BJ (cell line): ENCODE measurements at regions of chr17 and their contacts with region 1.

Region 1: GRCh38 chr17:15944759-15945529 is at the start of gene ADORA2B:
- DNase-seq: no peak
- H3K4me3 ChIP-seq: peak within 1 kb of the TSS; percentile 67
- H3K27me3 ChIP-seq: no peaks in the 10 kb centered on the region
- CTCF ChIP-seq: peak; percentile 39
- polyA plus RNA-seq, gene ADORA2B: 8.0 and 10.5 TPM in 2 replicates

Region 2: DNA sequence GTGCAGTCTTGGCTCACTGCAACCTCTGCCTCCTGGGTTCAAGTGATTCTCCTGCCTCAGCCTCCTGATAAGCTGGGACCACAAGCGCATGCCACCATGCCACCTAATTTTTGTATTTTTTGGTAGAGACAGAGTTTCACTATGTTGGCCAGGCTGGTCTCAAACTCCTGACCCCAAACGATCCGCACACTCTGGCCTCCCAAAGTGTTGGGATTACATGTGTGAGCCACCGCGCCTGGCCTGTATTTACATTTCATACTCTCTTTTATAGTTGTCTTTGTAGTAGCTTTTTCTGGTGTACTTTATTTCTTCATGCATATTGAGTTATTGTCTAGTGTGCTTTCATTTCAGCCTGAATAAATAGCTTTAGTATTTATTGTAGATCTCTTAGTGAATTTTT is 10.1 kb before region 1 on chr17:
- CTCF ChIA-PET with region 1: interaction called, 13 read pairs
- POLR2A ChIA-PET with region 1: no interaction called
- DNase-seq: no peak
- H3K4me3 ChIP-seq: no peak overlapping the region
- H3K27me3 ChIP-seq: no peaks in the 10 kb centered on the region
- CTCF ChIP-seq: no peak

Region 3: DNA sequence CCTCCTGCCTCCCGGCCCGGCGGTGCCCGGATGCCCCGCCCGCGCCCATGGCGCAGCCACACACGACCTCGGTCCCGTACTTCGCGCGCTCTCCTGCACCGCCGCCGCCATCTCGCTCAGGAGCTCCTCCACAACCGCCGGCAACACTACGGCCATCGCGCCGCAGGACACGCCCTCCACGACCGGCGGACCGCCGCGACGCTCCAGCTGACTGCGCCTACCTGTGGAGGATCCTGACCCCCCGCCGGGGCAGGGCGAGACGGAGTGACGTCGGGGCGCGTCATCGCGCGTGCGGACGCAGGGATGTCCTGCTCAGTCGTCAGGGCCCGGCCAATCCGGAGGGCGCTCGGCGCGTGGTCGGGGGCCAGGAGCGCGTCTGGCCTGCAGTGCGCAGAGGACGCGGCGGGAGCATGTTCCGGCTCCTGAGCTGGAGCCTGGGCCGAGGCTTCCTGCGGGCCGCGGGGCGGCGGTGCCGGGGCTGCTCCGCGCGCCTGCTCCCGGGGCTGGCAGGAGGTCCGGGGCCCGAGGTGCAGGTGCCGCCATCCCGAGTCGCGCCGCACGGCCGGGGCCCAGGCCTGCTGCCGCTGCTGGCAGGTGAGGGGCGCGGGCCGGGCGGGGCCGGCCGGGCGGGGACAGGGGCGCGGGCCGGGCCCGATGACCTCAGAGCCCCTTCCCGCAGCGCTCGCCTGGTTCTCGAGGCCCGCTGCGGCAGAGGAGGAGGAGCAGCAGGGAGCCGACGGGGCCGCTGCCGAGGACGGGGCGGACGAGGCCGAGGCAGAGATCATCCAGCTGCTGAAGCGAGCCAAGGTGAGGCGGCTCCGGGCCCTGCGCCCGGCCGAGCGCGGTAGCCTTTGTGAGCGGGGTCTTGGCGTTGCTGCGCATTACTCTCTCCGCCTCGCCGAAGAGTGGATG is 54.8 kb after region 1 on chr17 and contains the starts of genes TTC19 and ZSWIM7:
- CTCF ChIA-PET with region 1: interaction called, 36 read pairs
- POLR2A ChIA-PET with region 1: no interaction called
- DNase-seq: peak; percentile 54
- H3K4me3 ChIP-seq: peak within 1 kb of the TSS; percentile 70
- H3K27me3 ChIP-seq: no peaks in the 10 kb centered on the region
- CTCF ChIP-seq: no peak
- polyA plus RNA-seq, gene TTC19: 2.8 and 3.7 TPM in 2 replicates
- polyA plus RNA-seq, gene ZSWIM7: 21.6 and 28.9 TPM in 2 replicates

Region 4: DNA sequence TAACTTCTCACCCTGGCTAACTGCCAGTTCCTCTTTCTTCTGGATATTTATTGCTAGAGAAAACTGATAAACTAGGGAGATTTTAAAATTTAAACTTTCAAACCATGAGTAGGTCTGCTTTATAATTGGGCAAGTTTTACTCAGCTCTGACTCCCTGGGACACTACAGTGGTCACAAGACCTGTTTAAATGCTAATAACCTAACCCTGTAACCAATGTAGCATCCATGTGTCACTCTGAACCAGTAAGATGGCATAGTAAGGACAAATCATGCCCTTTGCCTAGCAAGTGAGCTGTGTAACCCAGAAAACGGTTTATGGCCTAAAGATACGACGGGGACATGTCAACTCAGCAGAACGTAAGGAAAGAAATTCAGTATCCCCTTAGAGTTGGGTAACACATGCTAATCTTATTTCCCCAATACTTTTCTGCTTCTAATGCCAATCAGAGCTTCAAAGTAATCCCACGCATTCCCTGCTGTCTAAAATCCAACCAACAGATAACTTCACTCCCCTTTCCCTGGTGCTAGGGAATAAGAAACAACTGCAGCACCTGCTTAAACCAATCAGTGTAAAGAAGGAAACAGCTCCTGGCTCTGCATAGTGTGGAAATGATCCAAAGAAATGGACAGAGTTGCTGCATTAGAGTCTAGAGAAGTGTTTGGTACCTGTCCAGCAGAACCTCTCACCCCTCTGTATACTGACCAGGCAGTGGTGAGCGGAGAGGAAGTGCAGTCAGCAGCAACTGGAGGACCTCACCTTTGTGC is 184.7 kb after region 1 on chr17:
- CTCF ChIA-PET with region 1: no interaction called
- POLR2A ChIA-PET with region 1: no interaction called
- DNase-seq: no peak
- H3K4me3 ChIP-seq: no peak overlapping the region
- H3K27me3 ChIP-seq: no peaks in the 10 kb centered on the region
- CTCF ChIP-seq: no peak